G401 (cell line): ENCODE measurements at regions of chr14 and their contacts with region 1.

Region 1: GRCh38 chr14:103384450-103385151 is 614 bp upstream of the MARK3 start:
- DNase-seq: peak; percentile 30

Region 2: GRCh38 chr14:103343905-103344797 is 40.5 kb before region 1 on chr14:
- in situ Hi-C with region 1: loop called (anchors 5 kb)
- DNase-seq: no peak

Region 3: DNA sequence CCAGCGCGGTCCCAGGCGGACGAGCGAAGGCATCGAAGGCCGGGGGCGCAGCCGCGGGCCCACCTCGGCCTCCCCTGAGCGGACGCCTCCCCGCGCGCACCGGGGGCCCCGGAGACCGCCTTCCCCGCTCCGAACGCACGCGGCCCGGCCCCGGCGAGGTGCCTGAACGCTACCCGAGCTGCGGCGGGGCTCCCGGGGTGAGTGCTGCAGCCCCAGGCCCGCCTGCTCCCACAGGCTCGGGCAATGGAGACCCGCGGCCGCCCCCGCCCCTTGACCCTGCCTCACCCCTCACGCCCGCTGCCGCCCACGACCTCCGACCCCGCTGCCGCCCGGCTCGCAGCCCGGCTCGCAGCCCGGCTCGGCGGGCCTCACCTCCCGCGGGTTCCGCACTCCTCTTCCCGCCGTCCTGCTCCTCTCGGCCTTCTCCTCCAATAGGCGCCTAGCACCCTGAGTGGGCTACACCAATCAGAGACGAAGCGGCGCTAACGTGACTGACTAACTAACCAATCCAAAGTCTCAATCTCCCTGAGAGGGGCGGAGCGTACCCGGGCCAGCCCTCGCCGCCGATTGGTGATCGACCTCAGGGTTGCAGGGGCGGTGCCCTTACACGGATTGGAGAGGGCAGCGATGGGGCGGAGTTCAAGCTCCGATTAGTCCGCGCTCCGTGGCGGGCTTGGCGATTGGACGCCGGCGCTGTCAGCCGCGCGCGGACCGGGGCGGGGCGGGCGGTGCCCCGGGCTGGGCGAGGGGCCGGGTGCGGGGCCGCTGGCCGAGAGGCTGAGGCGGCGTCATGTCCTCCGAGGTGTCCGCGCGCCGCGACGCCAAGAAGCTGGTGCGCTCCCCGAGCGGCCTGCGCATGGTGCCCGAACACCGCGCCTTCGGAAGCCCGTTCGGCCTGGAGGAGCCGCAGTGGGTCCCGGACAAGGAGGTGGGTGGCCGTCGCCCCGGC is 330.7 kb after region 1 on chr14 and contains the starts of genes XRCC3 and ZFYVE21:
- in situ Hi-C with region 1: no loop called
- DNase-seq: peak; percentile 99
- total RNA-seq, gene XRCC3: 52.7 and 53.0 TPM in 2 replicates
- total RNA-seq, gene ZFYVE21: 18.1 and 23.4 TPM in 2 replicates